Activated CD4-positive, alpha-beta T cell treated with anti-CD3 and anti-CD28 coated beads for 36 hours (primary cell): ENCODE measurements at regions of chr9 and their contacts with region 1.

Region 1: GRCh38 chr9:2241836-2242741 is 226.9 kb downstream of the SMARCA2 start:
- DNase-seq: peak; percentile 85
- ATAC-seq: peak; percentile 98
- H3K4me3 Mint-ChIP-seq: peak overlapping the region; percentile 74
- H3K27ac Mint-ChIP-seq: peak overlapping the region; percentile 72
- H3K4me1 Mint-ChIP-seq: peaks cover 16% of the 10 kb centered on the region
- H3K27me3 Mint-ChIP-seq: peaks cover 13% of the 10 kb centered on the region

Region 2: DNA sequence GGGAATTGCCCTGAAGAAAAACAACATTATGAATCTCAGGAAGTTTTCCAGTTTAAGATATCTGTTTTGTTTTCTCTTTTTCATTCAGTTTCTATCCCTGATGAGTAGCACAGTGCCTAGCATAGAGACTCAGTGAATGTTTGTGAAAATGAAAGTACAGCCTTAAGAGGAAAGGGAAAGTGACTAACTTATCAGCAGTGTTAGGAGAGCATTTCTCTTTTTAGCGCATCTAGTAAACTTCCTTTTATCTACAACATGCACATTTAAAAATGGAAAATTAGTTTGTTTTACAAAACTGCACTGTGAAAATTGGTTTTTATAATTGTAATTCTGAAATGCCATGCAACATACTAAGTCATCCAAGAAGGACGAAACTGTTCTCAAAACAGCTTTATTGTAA is 116.2 kb before region 1 on chr9:
- CTCF ChIA-PET with region 1: no interaction called
- POLR2A ChIA-PET with region 1: no interaction called
- intact Hi-C with region 1: loop called in 1 of 2 experiments (anchors 2 kb)
- DNase-seq: no peak
- ATAC-seq: peak; percentile 100
- H3K4me3 Mint-ChIP-seq: peak overlapping the region; percentile 22
- H3K27ac Mint-ChIP-seq: peak overlapping the region; percentile 87
- H3K4me1 Mint-ChIP-seq: peaks cover 39% of the 10 kb centered on the region
- H3K27me3 Mint-ChIP-seq: no peaks in the 10 kb centered on the region

Region 3: DNA sequence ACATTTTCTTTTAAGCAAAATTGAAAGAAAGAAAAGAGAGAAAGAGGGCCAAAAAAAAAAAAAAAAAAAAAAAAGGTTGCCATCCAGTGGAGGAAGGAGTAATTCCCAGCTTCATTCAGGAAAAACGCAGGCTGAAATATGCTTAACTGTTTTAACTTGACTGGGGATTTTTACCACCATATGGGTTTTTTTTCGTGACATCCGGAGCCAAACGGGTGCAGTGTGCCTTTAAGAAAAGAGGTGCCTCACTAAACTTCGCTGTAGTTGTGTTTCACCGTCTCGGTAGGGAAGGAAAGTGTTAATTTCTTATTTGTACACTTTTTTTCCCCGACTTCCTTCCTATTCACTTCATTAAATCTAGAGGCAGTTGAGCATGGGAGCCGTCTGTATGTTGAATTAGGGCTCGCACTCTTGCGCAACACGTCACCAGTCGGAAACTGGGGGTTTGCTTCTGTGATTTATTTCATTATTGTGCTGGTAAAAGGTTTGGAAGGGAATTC is 83.9 kb before region 1 on chr9:
- CTCF ChIA-PET with region 1: no interaction called
- POLR2A ChIA-PET with region 1: no interaction called
- intact Hi-C with region 1: loop called in 1 of 2 experiments (anchors 1 kb)
- DNase-seq: peak; percentile 54
- ATAC-seq: peak; percentile 70
- H3K4me3 Mint-ChIP-seq: peak overlapping the region; percentile 81
- H3K27ac Mint-ChIP-seq: peak overlapping the region; percentile 99
- H3K4me1 Mint-ChIP-seq: peaks cover 58% of the 10 kb centered on the region
- H3K27me3 Mint-ChIP-seq: no peaks in the 10 kb centered on the region

Region 4: DNA sequence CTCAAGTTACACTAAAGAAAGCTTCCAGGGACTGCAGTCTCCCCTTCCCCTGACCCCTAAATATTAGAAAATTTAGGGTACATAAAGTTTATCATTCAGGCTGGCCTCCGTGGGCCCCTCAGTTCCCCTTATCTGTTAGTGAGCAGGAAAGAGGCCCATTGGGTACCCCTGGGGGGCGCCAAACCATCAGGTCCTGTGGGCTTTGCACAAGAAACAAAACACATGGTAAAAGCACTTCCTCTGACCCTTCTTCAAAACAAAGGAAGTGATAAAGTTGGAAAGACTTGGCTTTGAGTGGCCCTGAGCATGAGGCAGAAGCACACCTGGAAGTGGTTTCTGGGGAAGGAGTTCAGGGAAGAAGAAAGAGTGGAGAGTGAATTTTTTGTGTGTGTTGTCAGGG is 14.0 kb before region 1 on chr9:
- CTCF ChIA-PET with region 1: no interaction called
- POLR2A ChIA-PET with region 1: no interaction called
- intact Hi-C with region 1: no loop called
- DNase-seq: peak; percentile 59
- ATAC-seq: no peak
- H3K4me3 Mint-ChIP-seq: no peak overlapping the region
- H3K27ac Mint-ChIP-seq: no peak overlapping the region
- H3K4me1 Mint-ChIP-seq: no peaks in the 10 kb centered on the region
- H3K27me3 Mint-ChIP-seq: no peaks in the 10 kb centered on the region

Region 5: DNA sequence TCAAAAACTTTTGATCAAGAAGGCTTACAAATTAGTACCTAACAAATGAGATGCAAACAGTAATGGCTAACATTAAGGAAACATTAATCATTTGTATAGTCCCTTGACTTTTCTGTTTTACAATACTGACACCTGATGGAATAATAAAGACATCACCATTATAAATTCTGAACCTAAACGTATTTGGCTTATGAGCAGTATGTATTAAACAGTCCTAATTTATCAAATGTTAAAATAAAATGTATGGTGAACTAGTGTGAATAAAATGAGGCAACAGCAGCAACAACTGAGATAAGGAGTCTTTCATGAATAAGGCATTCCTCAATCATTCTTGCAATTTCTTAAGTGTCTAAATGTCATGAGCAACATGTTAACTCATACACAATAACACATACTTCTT is 595.8 kb after region 1 on chr9:
- CTCF ChIA-PET with region 1: no interaction called
- POLR2A ChIA-PET with region 1: no interaction called
- intact Hi-C with region 1: loop called in 1 of 2 experiments (anchors 5 kb)
- DNase-seq: no peak
- ATAC-seq: no peak
- H3K4me3 Mint-ChIP-seq: no peak overlapping the region
- H3K27ac Mint-ChIP-seq: peak overlapping the region; percentile 77
- H3K4me1 Mint-ChIP-seq: peaks cover 15% of the 10 kb centered on the region
- H3K27me3 Mint-ChIP-seq: no peaks in the 10 kb centered on the region